ENCODE measurements at regions of chr12 and their contacts with region 1.

Region 1: GRCh38 chr12:19439059-19440018 is at the start of gene AEBP2:
- DNase-seq: peak; percentile 93
- H3K4me3 Mint-ChIP-seq: peak within 1 kb of the TSS; percentile 99
- H3K27ac Mint-ChIP-seq: peak within 1 kb of the TSS; percentile 95
- H3K4me1 Mint-ChIP-seq: peaks cover 37% of the 10 kb centered on the region
- H3K27me3 Mint-ChIP-seq: no peaks in the 10 kb centered on the region
- total RNA-seq, gene AEBP2: 44.7 to 45.0 TPM

Region 2: DNA sequence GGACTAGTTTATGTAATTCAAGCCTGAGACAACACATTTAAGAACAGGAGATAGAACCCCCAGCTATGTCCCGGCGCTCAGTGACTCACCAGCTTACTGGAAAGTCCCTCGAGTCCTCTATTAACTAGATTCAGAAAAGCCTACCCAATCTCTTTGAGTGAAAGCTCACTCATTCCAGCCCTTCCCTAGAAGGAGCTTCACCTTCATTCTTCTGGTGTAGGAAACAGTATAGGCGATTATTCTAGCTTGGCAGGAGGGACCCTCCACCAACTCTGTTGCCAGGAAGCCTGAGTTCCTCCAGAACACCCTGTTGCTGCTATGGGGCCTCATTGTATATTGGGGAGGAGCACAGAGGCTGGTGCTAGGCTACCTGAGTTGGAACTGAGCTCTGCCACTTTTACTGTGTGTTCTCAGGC is 57.2 kb before region 1 on chr12:
- CTCF ChIA-PET with region 1: no interaction called
- POLR2A ChIA-PET with region 1: interaction called, 4 read pairs
- intact Hi-C with region 1: loop called (anchors 2 kb)
- DNase-seq: peak; percentile 81
- H3K4me3 Mint-ChIP-seq: no peak overlapping the region
- H3K27ac Mint-ChIP-seq: peak overlapping the region; percentile 18
- H3K4me1 Mint-ChIP-seq: peaks cover 16% of the 10 kb centered on the region
- H3K27me3 Mint-ChIP-seq: no peaks in the 10 kb centered on the region

Region 3: DNA sequence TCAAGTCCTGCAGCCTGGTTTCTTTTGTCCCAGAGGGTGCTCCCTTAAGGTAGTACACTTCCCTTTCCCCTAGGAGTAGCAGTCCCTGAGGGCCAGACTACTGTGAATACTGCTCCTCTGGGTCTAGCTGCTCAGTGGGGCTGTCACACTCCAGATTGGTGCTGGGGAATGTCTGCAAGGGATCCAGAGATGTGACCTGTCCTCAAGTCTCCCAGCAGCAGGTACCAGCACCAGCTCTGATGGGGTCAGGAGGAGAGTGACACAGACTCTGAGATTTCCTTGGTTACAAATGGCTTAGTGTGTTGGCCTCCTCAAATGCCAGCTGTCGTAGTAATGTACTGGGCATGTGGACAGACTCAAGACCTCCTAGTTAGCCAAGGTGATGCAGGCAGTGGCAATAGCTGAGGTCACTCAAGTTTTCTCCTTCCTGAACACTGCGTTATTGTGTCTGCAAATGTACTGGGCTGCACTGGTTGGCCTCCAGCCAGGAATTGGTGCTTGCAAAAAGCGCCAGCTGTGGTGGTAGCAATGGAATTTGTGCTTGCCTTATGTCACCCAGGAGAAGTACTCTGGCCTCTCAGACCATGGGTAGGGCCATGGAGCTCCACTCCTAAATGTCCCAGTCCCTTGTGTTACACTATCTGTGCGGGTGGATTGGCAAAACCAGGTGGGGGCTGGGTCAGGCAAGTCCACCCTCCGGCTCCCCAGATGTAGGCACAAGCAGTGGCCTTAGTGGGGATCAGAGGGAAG is 36.4 kb before region 1 on chr12:
- CTCF ChIA-PET with region 1: no interaction called
- POLR2A ChIA-PET with region 1: no interaction called
- intact Hi-C with region 1: no loop called
- DNase-seq: no peak
- H3K4me3 Mint-ChIP-seq: no peak overlapping the region
- H3K27ac Mint-ChIP-seq: no peak overlapping the region
- H3K4me1 Mint-ChIP-seq: peaks cover 6% of the 10 kb centered on the region
- H3K27me3 Mint-ChIP-seq: no peaks in the 10 kb centered on the region

Region 4: GRCh38 chr12:19419086-19419485 is 20.3 kb before region 1 on chr12:
- CTCF ChIA-PET with region 1: no interaction called
- POLR2A ChIA-PET with region 1: no interaction called
- intact Hi-C with region 1: no loop called
- DNase-seq: no peak
- H3K4me3 Mint-ChIP-seq: no peak overlapping the region
- H3K27ac Mint-ChIP-seq: no peak overlapping the region
- H3K4me1 Mint-ChIP-seq: peaks cover 5% of the 10 kb centered on the region
- H3K27me3 Mint-ChIP-seq: no peaks in the 10 kb centered on the region

Region 5: DNA sequence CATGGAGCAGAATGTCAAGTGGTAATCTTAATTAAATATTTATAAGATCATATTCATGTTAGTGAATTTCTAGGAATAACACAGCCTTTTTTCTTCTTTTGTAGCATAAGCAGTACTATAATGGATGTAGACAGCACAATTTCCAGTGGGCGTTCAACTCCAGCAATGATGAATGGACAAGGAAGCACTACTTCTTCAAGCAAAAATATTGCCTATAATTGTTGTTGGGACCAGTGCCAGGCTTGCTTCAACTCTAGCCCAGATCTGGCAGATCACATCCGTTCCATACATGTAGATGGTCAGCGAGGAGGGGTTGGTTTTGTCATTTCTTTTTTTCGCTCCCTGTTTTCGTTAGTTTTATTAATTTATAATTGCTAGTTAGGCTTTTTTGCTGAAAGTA is 23.1 kb after region 1 on chr12:
- CTCF ChIA-PET with region 1: no interaction called
- POLR2A ChIA-PET with region 1: no interaction called
- intact Hi-C with region 1: loop called (anchors 2 kb)
- DNase-seq: no peak
- H3K4me3 Mint-ChIP-seq: no peak overlapping the region
- H3K27ac Mint-ChIP-seq: no peak overlapping the region
- H3K4me1 Mint-ChIP-seq: peaks cover 46% of the 10 kb centered on the region
- H3K27me3 Mint-ChIP-seq: no peaks in the 10 kb centered on the region

Region 6: GRCh38 chr12:19482551-19483109 is 43.3 kb after region 1 on chr12:
- CTCF ChIA-PET with region 1: no interaction called
- POLR2A ChIA-PET with region 1: interaction called, 5 read pairs
- intact Hi-C with region 1: loop called (anchors 1 kb)
- DNase-seq: peak; percentile 85
- H3K4me3 Mint-ChIP-seq: peak overlapping the region; percentile 30
- H3K27ac Mint-ChIP-seq: peak overlapping the region; percentile 77
- H3K4me1 Mint-ChIP-seq: peaks cover 59% of the 10 kb centered on the region
- H3K27me3 Mint-ChIP-seq: no peaks in the 10 kb centered on the region

Region 7: DNA sequence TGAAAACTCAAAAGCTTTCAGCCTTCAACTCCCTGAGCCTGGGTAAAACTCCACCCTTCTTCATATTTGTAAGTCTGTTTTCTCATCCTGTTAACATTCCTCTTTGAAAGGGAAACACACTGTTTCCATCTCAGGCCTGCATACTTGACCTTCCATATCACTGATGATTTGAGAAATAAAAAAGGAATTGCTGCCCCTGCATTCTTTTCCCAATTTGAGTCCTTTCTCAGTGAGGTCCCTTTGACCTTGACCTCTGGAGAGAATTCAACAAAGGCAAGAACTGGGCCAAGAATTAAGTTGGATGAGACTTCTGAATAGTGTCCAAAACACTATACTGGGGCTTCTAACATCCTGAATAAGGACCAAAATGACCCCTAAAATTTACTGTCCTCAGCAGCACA is 107.9 kb after region 1 on chr12:
- CTCF ChIA-PET with region 1: no interaction called
- POLR2A ChIA-PET with region 1: interaction called, 3 read pairs
- intact Hi-C with region 1: loop called (anchors 1 kb)
- DNase-seq: no peak
- H3K4me3 Mint-ChIP-seq: no peak overlapping the region
- H3K27ac Mint-ChIP-seq: no peak overlapping the region
- H3K4me1 Mint-ChIP-seq: peaks cover 4% of the 10 kb centered on the region
- H3K27me3 Mint-ChIP-seq: no peaks in the 10 kb centered on the region

Measured in activated CD4-positive, alpha-beta memory T cell treated with anti-CD3 and anti-CD28 coated beads for 36 hours (primary cell).